Adrenal gland (tissue), 19 donors: ENCODE measurements at regions of chr2 and their contacts with region 1.

Region 1: GRCh38 chr2:239339726-239340601 is 60.9 kb downstream of the HDAC4 start:
- DNase-seq: no peak
- H3K4me3 ChIP-seq: no peak overlapping the region
- H3K27ac ChIP-seq: peak overlapping the region in 1 of 5 donors; percentile 27
- H3K4me1 ChIP-seq: no peaks in the 10 kb centered on the region
- H3K27me3 ChIP-seq: no peaks in the 10 kb centered on the region
- CTCF ChIP-seq: no peak
- POLR2A ChIP-seq: no peak

Region 2: DNA sequence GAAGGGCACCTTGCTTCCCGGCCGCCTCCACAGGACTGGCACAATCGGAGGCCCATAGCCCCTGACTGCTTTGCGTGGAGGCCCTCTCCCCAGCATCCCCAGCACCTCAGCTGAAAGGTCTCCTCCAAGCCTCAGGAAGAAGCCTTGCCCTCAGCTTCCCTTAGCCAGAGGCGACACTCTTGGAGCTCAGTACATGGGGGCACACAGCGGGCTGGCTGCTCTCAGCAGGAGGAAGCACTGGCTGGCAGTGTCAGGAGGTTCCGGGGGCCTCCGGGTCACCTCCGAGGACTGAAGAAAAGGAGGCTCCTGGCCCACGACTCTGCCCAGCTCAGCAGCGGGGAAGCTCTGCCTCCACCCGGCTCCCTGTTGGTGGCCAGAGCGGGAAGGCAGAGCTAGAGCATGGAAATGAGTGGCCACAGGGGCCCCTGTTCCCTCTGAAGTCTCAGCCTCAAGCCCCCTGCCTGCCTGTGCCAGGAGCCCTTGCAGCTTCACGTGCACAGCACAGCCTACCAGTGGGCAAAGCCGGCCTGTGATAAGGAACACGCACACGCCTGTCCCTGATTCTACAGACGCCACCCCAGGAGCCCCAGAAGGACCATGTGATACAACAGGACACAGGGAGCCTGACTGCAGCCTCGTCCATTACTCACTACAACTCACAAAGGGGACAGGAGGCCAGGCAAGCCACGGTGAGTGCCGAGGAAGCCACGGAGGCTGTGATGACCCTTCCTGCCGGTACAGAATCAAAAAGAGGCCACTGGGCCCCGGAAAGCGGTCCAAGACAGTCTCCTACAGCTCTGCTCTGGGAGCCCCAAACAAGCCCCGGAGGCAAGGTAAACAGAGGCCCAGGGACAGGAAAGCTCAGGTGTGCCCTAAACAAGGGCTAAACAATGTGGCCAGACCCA is 45.4 kb after region 1 on chr2:
- intact Hi-C with region 1: loop called in 1 of 2 experiments (anchors 5 kb)
- DNase-seq: no peak
- H3K4me3 ChIP-seq: no peak overlapping the region
- H3K27ac ChIP-seq: no peak overlapping the region
- H3K4me1 ChIP-seq: peaks cover 0 to 9% of the 10 kb centered on the region in 2 donors
- H3K27me3 ChIP-seq: no peaks in the 10 kb centered on the region
- CTCF ChIP-seq: no peak
- POLR2A ChIP-seq: no peak